ENCODE measurements at regions of chr3 and their contacts with region 1.

Region 1: GRCh38 chr3:167694121-167694520 is 40.4 kb upstream of the WDR49 start:
- DNase-seq: no peak
- H3K4me3 ChIP-seq: no peak overlapping the region
- H3K27ac ChIP-seq: no peak overlapping the region
- H3K4me1 ChIP-seq: peaks cover 16% of the 10 kb centered on the region
- CTCF ChIP-seq: no peak

Region 2: GRCh38 chr3:167705840-167706239 is 11.7 kb after region 1 on chr3:
- CTCF ChIA-PET with region 1: no interaction called
- POLR2A ChIA-PET with region 1: interaction called, 12 read pairs
- intact Hi-C with region 1: no loop called
- DNase-seq: no peak
- H3K4me3 ChIP-seq: no peak overlapping the region
- H3K27ac ChIP-seq: no peak overlapping the region
- H3K4me1 ChIP-seq: no peaks in the 10 kb centered on the region
- CTCF ChIP-seq: no peak